Right lobe of liver (tissue), 6 donors: ENCODE measurements at regions of chr10 and their contacts with region 1.

Region 1: DNA sequence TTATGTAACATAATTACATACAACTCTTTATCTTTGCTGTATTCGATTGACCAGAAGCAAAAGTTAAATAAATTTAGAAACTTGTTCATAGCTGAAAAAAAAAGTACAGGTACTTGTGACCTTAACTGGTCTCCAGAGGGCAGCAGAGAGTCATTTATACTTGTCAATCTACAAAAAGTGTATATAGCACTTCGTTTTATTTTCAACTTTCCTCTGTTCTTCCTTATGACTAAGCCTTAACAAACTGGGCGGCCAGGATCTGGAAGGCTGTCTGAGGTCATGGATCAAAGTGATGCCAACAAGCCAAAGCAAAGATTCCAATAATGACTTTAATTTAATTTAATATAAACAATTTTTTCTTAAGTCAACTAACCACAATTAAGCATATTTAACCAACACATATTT is 29.8 kb downstream of the C10orf67 start:
- DNase-seq: no peak
- ATAC-seq: peak; percentile 80 to 94 (median 84)
- H3K4me3 ChIP-seq: no peak overlapping the region
- H3K27ac ChIP-seq: no peak overlapping the region
- H3K4me1 ChIP-seq: no peaks in the 10 kb centered on the region
- H3K27me3 ChIP-seq: no peaks in the 10 kb centered on the region
- CTCF ChIP-seq: peak; percentile 68 to 82 (median 73)
- POLR2A ChIP-seq: no peak

Region 2: DNA sequence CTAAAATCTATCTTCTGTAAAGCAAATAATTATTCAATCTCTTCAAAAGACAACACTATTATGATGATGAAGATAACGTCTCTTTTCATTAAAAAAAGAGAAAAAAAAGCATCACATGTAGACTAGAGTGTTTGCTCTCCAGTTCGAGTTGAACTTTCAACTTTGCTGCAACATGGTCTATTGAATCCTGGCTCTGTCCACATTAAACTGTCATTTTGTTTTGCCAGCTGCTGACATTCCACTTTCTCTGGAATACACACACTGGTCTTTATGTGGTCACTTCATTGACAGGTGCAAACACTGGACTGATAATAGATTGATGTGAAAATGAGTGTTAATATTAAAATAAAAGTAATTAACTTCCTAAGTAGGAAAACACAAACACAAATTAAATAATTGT is 61.1 kb before region 1 on chr10:
- intact Hi-C with region 1: no loop called
- DNase-seq: no peak
- ATAC-seq: peak; percentile 73 to 96 (median 92)
- H3K4me3 ChIP-seq: no peak overlapping the region
- H3K27ac ChIP-seq: no peak overlapping the region
- H3K4me1 ChIP-seq: no peaks in the 10 kb centered on the region
- H3K27me3 ChIP-seq: no peaks in the 10 kb centered on the region
- CTCF ChIP-seq: no peak
- POLR2A ChIP-seq: no peak

Region 3: DNA sequence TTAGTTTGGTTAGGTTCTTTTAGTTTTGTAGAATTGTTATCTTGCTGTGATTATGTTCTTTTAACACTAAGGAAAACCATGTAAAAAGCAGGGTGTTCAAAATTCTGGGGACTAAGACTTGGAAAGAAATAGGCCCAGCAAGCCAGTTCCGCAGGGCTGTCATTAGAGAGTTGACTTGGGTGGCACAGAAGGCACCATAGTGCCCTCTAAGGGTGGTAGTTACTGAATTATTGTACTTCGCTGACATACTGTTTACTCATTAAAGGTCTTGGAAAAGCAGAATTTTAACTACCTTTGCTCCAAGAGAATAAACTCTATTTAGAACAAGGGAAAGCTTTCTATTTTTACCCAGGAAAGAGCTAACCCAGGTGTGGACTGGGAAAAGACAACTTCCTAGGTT is 210.6 kb after region 1 on chr10:
- intact Hi-C with region 1: loop called (anchors 5 to 10 kb)
- DNase-seq: no peak
- ATAC-seq: peak; percentile 93 to 97 (median 94)
- H3K4me3 ChIP-seq: no peak overlapping the region
- H3K27ac ChIP-seq: no peak overlapping the region
- H3K4me1 ChIP-seq: no peaks in the 10 kb centered on the region
- H3K27me3 ChIP-seq: no peaks in the 10 kb centered on the region
- CTCF ChIP-seq: peak; percentile 48 to 67 (median 61)
- POLR2A ChIP-seq: no peak

Region 4: GRCh38 chr10:23702977-23703414 is 388.2 kb after region 1 on chr10:
- intact Hi-C with region 1: loop called in 1 of 2 experiments (anchors 10 kb)
- DNase-seq: peak; percentile 40 to 62 (median 61)
- ATAC-seq: peak; percentile 99
- H3K4me3 ChIP-seq: no peak overlapping the region
- H3K27ac ChIP-seq: no peak overlapping the region
- H3K4me1 ChIP-seq: no peaks in the 10 kb centered on the region
- H3K27me3 ChIP-seq: no peaks in the 10 kb centered on the region
- CTCF ChIP-seq: peak; percentile 52 to 77 (median 72)
- POLR2A ChIP-seq: no peak